ENCODE measurements at regions of chr10 and their contacts with region 1.

Region 1: GRCh38 chr10:100878291-100878910 is 34.4 kb upstream of the SLF2 start:
- DNase-seq: peak; percentile 87

Region 2: DNA sequence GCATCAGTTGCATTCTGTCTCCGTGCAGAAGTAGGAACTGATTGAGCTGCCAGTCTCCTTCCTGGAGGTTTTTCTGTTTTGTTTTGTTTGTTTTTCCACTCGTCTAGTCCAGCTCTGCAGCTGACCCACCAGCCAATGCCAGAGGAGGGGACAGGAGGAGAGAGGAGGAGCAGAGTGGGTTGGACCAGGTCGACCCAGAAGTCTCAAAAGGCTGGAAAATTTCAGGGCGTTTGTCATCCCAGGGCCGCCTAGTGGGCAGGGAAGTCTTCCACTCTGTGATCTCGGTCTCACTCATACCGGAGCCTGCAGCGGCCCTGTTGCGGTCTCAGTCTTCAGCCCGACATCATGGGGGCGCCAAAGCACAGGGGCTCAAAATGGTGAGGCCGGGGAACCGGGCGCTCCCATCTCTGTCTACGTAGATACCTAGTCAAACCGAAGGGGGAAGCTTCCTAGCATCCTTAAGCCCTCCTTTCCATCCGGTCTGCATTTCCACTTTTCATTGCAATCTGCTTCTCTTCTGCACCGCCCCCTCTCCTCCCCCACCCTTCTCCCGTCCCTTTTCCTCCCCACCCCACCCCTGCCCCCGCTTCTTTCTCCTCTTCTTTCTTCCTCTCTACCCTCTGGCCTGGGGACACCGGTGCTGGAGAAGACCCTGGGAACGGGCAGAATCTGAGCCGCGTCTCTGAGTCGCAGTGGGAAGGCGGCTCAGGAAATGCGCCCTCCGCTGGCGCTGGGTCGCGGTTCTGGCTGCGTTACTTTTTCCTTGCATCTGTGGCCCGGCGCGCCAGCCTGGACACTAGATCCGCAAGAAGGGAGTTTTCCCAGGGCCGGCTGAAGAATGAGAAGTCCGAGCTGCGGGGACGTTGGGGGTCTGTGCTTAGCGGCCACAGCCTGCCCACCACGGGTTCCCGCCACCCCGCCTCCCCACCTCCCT is 149.2 kb before region 1 on chr10:
- CTCF ChIA-PET with region 1: interaction called, 12 read pairs
- POLR2A ChIA-PET with region 1: no interaction called
- DNase-seq: peak; percentile 79

Region 3: GRCh38 chr10:100888796-100889356 is 10.5 kb after region 1 on chr10:
- CTCF ChIA-PET with region 1: interaction called, 14 read pairs
- POLR2A ChIA-PET with region 1: no interaction called
- DNase-seq: no peak